BJ (cell line): ENCODE measurements at regions of chr3 and their contacts with region 1.

Region 1: GRCh38 chr3:33883538-33883950 is 85.1 kb downstream of the PDCD6IP start:
- DNase-seq: no peak
- H3K4me3 ChIP-seq: no peak overlapping the region
- H3K27me3 ChIP-seq: peaks cover 1% of the 10 kb centered on the region; the same call in 1 of the 2 replicates
- CTCF ChIP-seq: peak; percentile 68

Region 2: DNA sequence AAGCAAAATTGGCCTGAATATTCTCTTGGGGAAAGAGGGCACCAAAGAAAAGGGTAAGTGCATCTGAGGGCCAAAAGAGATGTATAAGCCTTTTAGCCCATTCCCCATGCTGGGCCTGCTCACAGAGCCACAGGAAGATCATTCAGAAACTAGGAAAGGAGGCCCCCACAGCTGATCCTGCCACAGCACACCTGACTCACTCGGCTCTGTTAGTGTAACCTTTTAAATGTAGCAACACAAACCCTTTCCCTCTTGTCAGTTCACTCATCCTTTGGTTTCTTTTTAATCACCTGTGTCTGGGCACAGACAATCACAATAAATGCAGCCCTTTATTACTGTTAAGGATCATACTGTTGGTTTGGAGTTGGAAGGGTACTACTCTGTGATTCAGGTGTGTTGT is 15.2 kb before region 1 on chr3:
- CTCF ChIA-PET with region 1: interaction called, 10 read pairs
- POLR2A ChIA-PET with region 1: no interaction called
- DNase-seq: no peak
- H3K4me3 ChIP-seq: no peak overlapping the region
- H3K27me3 ChIP-seq: no peaks in the 10 kb centered on the region
- CTCF ChIP-seq: no peak

Region 3: GRCh38 chr3:33915791-33916546 is 32.4 kb after region 1 on chr3:
- CTCF ChIA-PET with region 1: interaction called, 13 read pairs
- POLR2A ChIA-PET with region 1: no interaction called
- DNase-seq: no peak
- H3K4me3 ChIP-seq: no peak overlapping the region
- H3K27me3 ChIP-seq: no peaks in the 10 kb centered on the region; the same call in 1 of the 2 replicates
- CTCF ChIP-seq: peak; percentile 18; the same call in 1 of the 2 replicates

Region 4: DNA sequence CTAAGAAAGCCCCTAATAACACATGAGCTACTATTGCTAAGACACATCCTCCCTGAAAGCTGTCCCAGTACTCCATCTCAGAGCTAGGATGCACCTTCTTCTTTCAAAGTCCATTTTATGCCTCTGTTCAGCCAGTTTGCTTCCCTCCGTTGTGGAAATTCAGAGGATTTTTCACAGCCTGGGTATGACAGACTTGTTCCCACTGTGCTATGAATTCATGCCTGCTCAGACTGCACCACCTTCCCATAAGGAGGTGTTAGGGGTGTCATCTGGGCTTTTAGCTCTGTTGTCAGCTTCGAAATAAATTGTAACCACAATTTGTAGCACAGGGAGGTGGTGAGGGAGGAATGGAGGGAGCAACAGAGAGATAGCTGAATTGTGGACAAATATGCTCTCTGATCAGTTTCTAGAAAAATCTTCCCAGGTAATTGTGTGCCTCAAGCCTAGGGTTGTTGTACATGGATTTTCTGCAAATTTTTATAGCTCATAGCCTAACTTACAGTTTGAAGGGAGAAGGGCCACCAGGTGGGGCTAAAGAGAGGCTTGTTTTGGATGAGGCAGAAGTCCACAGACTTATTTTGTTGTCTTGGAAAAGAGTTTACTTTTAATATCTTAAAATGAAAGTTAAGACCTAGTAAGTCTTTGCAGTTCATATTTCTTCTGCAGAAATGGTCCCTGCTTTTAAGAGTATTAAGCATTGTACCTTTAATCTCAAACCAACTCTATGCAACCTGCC is 376.9 kb after region 1 on chr3:
- CTCF ChIA-PET with region 1: interaction called, 12 read pairs
- POLR2A ChIA-PET with region 1: no interaction called
- DNase-seq: no peak
- H3K4me3 ChIP-seq: no peak overlapping the region
- H3K27me3 ChIP-seq: no peaks in the 10 kb centered on the region
- CTCF ChIP-seq: peak; percentile 70

Region 5: DNA sequence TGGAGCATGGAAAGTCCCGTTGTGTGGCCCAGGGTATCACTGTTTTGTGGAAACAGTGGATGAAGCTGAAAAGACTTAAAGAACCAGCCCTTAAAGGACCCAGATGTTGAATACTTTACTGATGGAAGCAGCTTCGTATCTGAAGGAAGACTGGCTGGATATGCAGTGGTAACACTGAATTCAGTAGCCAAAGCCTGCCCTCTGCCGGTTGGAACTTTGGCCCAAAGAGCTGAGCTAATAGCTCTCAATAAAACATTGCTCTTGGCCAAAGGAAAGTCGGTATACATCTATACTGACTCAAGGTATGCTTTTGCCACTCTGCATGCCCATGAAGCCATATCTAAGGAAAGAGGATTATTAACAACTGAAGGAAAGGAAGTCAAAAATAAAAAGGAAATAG is 800.3 kb after region 1 on chr3:
- CTCF ChIA-PET with region 1: interaction called, 105 read pairs
- POLR2A ChIA-PET with region 1: no interaction called
- DNase-seq: no peak
- H3K4me3 ChIP-seq: no peak overlapping the region
- H3K27me3 ChIP-seq: no peaks in the 10 kb centered on the region
- CTCF ChIP-seq: peak; percentile 65